Endothelial cell of umbilical vein (primary cell): ENCODE measurements at regions of chr5 and their contacts with region 1.

Region 1: DNA sequence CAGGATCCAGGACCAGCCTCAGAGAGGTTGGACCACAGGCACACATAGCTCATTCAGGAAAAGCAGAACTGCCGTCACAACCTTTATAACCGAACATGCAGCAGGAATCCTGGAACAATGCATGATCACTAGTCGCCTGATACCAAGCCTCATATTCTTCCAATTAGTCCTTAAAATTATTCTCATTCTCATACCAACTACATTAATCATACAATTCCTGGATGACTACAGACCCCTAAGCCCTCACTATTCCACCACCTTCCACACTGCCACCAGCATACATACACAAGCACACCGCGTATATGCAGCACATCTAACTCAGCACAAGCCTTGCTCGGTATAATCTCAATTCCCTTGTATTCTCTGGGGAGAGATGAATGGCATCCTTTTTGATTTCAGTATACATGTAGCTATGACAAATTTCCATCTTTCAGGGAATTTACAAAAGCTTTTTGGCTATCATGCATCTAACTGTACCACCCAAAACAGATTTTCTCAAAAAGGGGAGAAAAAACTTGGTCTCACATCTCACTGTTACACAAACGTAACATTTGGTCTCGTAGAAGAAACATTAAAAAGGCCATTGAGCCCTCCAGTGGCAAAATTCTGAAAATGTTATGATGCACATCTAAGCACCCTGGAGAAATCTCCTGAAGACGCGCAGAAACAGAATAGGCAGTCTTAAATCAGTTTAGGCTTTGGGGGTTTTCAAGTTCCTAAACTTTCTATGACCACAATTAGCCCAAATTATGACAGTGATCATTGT is 46.2 kb downstream of the MCTP1 start:
- DNase-seq: peak; percentile 68
- H3K4me3 ChIP-seq: no peak overlapping the region
- H3K27ac ChIP-seq: peak overlapping the region; percentile 82
- H3K4me1 ChIP-seq: peaks cover 32% of the 10 kb centered on the region
- H3K27me3 ChIP-seq: no peaks in the 10 kb centered on the region
- CTCF ChIP-seq: peak; percentile 11 to 30
- POLR2A ChIP-seq: no peak

Region 2: GRCh38 chr5:95216136-95216955 is 22.4 kb before region 1 on chr5:
- CTCF ChIA-PET with region 1: interaction called, 5 read pairs
- POLR2A ChIA-PET with region 1: interaction called, 4 read pairs
- dilution Hi-C with region 1: no loop called
- intact Hi-C with region 1: loop called (anchors 1 kb)
- DNase-seq: peak; percentile 79
- H3K4me3 ChIP-seq: no peak overlapping the region
- H3K27ac ChIP-seq: peak overlapping the region; percentile 91
- H3K4me1 ChIP-seq: peaks cover 27% of the 10 kb centered on the region
- H3K27me3 ChIP-seq: no peaks in the 10 kb centered on the region
- CTCF ChIP-seq: no peak
- POLR2A ChIP-seq: no peak

Region 3: DNA sequence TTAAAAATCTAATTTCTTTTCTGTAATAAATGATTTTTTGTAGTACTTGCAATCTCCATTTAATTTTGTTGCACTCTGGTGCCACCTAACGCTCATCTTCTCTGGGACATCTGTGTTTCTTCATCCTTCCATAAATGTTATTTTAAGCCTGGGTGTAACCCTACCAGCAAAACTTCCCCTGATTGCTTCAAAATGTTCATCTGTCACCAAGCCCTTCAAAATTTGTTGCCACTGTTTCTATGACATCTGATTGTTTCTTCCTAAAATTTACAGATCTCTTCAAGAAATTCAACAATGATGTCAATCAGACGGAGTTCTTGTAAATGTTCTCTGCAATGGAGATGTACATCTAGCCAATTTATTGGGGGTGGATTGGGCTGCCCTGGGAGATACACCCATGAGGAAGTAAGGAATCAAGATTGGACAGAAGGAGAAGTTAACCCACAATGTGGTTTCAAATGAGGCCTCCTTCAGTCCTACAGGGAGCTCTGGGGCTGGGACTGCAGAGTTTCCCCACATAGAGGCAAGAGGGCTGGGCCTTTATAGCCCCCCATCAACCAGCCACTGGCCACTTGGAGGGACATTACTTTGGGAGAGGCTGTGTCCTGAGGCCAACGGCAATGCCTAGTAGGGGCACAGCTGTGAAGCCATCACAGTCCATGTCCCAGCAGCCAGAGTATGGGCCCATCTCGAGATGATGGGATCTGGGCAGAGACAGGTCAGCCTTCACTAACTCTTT is 22.9 kb after region 1 on chr5:
- CTCF ChIA-PET with region 1: interaction called, 6 read pairs
- POLR2A ChIA-PET with region 1: no interaction called
- dilution Hi-C with region 1: no loop called
- intact Hi-C with region 1: loop called (anchors 2 kb)
- DNase-seq: peak; percentile 72
- H3K4me3 ChIP-seq: no peak overlapping the region
- H3K27ac ChIP-seq: no peak overlapping the region
- H3K4me1 ChIP-seq: peaks cover 4% of the 10 kb centered on the region
- H3K27me3 ChIP-seq: peaks cover 3 to 8% of the 10 kb centered on the region in 2 experiments
- CTCF ChIP-seq: peak; percentile 39 to 41
- POLR2A ChIP-seq: no peak

Region 4: DNA sequence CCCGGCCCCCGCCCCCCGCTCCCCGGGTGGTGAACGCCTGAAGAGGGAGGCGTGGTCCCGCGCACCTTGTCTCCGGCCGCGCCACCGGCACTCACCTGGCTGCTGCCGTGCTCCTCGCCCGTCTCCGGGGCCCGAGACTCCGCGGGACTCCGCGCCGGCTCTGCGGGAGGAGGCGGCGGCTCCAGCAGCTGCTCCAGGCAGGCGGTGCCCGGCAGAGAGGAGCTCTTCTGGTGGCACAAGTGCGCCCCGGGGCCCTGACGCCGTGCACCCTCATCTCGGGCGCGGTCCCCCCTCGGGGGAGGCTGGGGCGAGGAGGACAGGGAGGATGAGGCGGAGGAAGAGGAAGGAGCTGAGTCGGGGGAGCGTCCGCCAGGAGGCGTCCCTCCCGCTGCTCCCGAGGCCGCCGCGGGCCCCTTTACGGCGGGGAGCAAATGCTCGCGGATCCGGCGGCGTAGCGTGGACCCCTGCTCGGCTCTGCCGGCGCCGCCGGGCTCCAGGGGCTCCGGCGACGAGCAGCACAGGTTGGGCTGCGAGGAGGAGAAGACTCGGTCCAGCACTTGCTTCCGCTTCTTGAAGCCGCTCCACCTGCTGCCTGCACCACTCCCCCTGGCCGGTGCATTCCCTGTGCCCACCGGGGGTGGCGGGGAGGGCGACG is 45.1 kb after region 1 on chr5:
- CTCF ChIA-PET with region 1: no interaction called
- POLR2A ChIA-PET with region 1: no interaction called
- dilution Hi-C with region 1: no loop called
- intact Hi-C with region 1: no loop called
- DNase-seq: peak; percentile 28
- H3K4me3 ChIP-seq: peak overlapping the region; percentile 27 to 55 (median 44)
- H3K27ac ChIP-seq: no peak overlapping the region
- H3K4me1 ChIP-seq: peaks cover 14% of the 10 kb centered on the region
- H3K27me3 ChIP-seq: peaks cover 50 to 77% of the 10 kb centered on the region in 2 experiments
- CTCF ChIP-seq: peak; percentile 38 to 58
- POLR2A ChIP-seq: no peak